K562 (cell line): ENCODE measurements at regions of chr2 and their contacts with region 1.

Region 1: DNA sequence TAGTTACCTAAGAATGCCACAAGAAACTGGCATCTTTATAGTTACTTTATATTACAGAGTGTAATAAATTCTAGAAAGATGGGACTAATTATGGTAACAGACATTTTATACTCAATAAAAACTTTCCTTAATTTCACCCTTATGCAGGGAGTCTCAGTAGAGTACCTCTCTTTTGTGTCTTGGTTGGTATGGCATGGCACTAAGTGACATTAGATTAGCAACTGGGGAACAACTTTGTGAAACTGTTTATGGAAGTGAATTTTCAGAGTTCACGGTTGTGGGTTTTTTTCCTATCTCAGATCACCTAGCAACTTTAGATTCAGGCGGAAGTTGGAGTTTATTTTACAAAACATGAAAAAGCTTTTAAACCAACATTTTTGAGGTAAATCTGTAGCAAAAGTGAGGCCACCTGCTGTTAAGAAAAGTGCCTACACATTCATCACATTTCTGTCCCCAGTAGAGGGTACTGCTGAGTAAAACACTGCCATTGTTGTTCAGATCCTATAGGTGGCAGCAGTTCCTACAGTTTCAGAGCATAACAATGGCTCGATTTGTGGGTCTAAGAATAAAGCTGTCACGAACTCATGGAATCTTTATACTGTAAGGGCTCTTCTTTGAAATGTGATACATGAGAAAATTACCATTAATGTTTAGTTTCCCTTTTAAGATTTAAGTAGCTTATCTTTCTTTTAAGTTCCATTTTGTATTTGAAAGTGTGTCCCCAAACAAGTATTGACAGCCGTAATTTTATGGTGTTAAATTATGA is 117.6 kb downstream of the CAMKMT start:
- DNase-seq: peak; percentile 64 to 80 (median 70)
- ATAC-seq: peak; percentile 99
- H3K4me3 ChIP-seq: no peak overlapping the region
- H3K27ac ChIP-seq: no peak overlapping the region
- H3K4me1 ChIP-seq: no peaks in the 10 kb centered on the region
- H3K27me3 ChIP-seq: no peaks in the 10 kb centered on the region
- CTCF ChIP-seq: peak; percentile 100
- EP300 ChIP-seq: 0 out of 2 replicates have a peak, but pooled peaks have one; percentile 15
- POLR2A ChIP-seq: no peak
- RAD21 ChIP-seq: peak; percentile 97 to 98

Region 2: DNA sequence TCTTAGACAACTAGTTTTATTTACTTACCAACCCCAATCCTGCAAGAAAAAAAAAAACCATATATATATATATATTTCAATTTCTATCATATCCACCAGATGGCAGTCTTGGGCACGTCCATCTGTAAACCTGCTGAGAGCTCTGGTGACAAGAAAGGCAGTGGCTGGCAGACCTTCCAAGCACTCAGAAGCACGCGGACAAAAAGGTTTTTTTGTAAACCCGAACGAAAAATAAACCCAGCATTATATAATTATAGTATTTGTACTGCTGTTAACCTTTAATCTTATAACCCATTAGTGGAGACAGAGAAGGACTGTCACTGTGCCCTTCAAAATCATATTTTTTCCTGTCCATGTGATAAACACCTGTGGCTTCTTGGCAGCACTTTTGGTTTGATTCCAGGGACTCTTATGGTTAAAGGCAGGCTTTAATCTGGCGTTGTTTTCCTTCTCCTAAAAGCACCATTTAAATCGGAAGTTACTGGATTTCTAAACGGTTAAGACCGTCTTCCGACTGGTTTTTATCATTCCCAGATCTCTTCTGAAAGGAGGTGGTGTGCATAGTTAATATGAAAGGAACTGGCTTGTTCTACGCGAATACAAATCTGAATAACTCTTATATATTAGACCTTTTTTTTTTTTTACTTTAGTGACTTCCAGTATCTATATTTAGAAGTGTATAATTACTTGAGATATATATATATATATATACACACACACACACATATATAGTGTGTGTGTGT is 235.0 kb before region 1 on chr2:
- CTCF ChIA-PET with region 1: no interaction called
- POLR2A ChIA-PET with region 1: no interaction called
- in situ Hi-C with region 1: no loop called
- intact Hi-C with region 1: loop called (anchors 1 kb)
- DNase-seq: peak; percentile 46 to 74 (median 53)
- ATAC-seq: peak; percentile 86
- H3K4me3 ChIP-seq: no peak overlapping the region
- H3K27ac ChIP-seq: no peak overlapping the region
- H3K4me1 ChIP-seq: no peaks in the 10 kb centered on the region; a peak in 1 of 5 replicates
- H3K27me3 ChIP-seq: peaks cover 3% of the 10 kb centered on the region in 2 experiments; a peak in 2 of 5 replicates
- CTCF ChIP-seq: peak; percentile 48 to 68 (median 60); a peak in 5 of 6 replicates
- EP300 ChIP-seq: no peak
- POLR2A ChIP-seq: no peak
- RAD21 ChIP-seq: peak; percentile 40 to 50

Region 3: DNA sequence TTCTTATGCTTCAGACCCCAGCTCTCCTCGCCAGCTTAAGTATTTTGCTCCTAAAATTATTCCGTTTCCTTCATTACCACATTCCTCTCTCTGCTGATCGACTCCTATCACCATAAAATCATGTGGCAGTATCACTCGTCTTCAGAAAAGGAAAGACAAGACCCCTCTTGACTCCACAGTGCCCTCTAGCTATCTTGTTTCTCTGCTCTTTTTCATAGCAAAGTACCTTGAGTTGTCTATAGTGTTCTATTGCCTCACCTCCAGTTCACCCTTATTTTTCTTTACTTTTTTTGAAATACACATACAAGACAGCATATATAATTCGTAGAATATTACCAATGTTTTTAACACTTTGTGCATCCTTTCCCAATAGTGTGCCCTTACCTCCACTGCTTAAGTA is 189.0 kb after region 1 on chr2:
- CTCF ChIA-PET with region 1: no interaction called
- POLR2A ChIA-PET with region 1: no interaction called
- in situ Hi-C with region 1: no loop called
- intact Hi-C with region 1: loop called (anchors 1 kb)
- DNase-seq: peak in 1 of 4 experiments; percentile 11
- ATAC-seq: no peak
- H3K4me3 ChIP-seq: no peak overlapping the region
- H3K27ac ChIP-seq: no peak overlapping the region
- H3K4me1 ChIP-seq: no peaks in the 10 kb centered on the region
- H3K27me3 ChIP-seq: peaks cover 0 to 2% of the 10 kb centered on the region in 2 experiments; a peak in 2 of 5 replicates
- CTCF ChIP-seq: peak; percentile 36 to 48 (median 37); a peak in 4 of 6 replicates
- EP300 ChIP-seq: no peak
- POLR2A ChIP-seq: no peak
- RAD21 ChIP-seq: peak in 1 of 2 experiments; percentile 45; a peak in 2 of 4 replicates

Region 4: GRCh38 chr2:44955593-44956392 is 476.5 kb after region 1 on chr2:
- CTCF ChIA-PET with region 1: interaction called, 24 read pairs
- POLR2A ChIA-PET with region 1: no interaction called
- in situ Hi-C with region 1: no loop called
- intact Hi-C with region 1: loop called (anchors 1 kb)
- DNase-seq: peak; percentile 75 to 78 (median 78)
- ATAC-seq: peak; percentile 93
- H3K4me3 ChIP-seq: no peak overlapping the region
- H3K27ac ChIP-seq: no peak overlapping the region
- H3K4me1 ChIP-seq: peaks cover 0 to 26% of the 10 kb centered on the region in 2 experiments; a peak in 3 of 5 replicates
- H3K27me3 ChIP-seq: peaks cover 19 to 66% of the 10 kb centered on the region in 2 experiments; a peak in 4 of 5 replicates
- CTCF ChIP-seq: peak; percentile 79 to 97 (median 87)
- EP300 ChIP-seq: no peak
- POLR2A ChIP-seq: no peak
- RAD21 ChIP-seq: peak; percentile 83 to 92